IMR-90 (cell line): ENCODE measurements at regions of chr17 and their contacts with region 1.

Region 1: DNA sequence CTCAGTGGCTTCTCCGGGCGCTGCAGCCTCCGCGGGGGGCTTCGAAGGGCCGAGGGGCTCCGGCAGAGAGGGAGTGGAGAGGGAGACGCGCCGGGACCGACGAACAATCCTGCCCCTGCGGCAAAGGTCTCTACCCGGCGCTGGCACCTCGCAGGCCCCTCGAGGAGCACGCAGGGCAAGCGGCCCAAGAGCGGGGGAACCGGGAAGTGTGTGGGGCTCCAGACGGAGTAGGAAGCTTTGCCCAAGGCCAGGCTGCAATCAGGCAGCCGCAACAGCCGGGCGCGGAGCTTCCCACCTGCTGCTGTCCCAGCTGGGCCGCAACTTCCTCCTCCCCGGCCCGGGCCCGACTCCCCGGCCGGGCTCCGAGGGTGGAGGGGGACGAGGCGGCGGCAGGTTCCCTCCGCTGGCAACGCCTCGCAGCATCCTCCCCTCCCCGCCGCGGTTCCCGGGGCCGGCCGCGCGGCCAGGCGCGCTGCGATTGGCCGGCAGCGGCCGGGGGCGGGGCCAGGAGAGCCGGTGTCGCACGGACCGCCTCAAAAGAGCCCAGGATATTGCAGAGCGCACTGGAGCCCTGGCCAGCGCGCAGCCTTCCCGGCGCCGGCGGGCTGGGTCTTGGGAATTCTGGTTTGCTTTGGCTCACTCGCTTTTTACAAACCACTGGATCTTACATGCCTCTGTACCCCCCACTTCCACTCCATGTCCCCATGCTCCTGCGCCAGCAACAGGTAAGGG is at the start of gene KCNJ2:
- DNase-seq: peak; percentile 79
- ATAC-seq: peak; percentile 94
- H3K4me3 ChIP-seq: peak within 1 kb of the TSS; percentile 73
- H3K27ac ChIP-seq: peak within 1 kb of the TSS; percentile 75
- H3K4me1 ChIP-seq: no peaks in the 10 kb centered on the region
- H3K27me3 ChIP-seq: no peaks in the 10 kb centered on the region
- CTCF ChIP-seq: no peak
- POLR2A ChIP-seq: peak; percentile 66; the same call in 1 of the 2 replicates
- RAD21 ChIP-seq: no peak
- total RNA-seq, gene KCNJ2: 5.8 and 8.6 TPM in 2 replicates

Region 2: GRCh38 chr17:69327060-69327831 is 841.9 kb before region 1 on chr17 and contains the start of gene ABCA5:
- CTCF ChIA-PET with region 1: no interaction called
- POLR2A ChIA-PET with region 1: no interaction called
- dilution Hi-C with region 1: no loop called
- in situ Hi-C with region 1: no loop called
- intact Hi-C with region 1: loop called (anchors 5 kb)
- DNase-seq: peak; percentile 79
- ATAC-seq: peak; percentile 94
- H3K4me3 ChIP-seq: peak within 1 kb of the TSS; percentile 57
- H3K27ac ChIP-seq: no peak within 1 kb of the TSS
- H3K4me1 ChIP-seq: no peaks in the 10 kb centered on the region; the same call in 1 of the 2 replicates
- H3K27me3 ChIP-seq: no peaks in the 10 kb centered on the region; the same call in none of the 2 replicates
- CTCF ChIP-seq: no peak
- POLR2A ChIP-seq: no peak
- RAD21 ChIP-seq: no peak
- total RNA-seq, gene ABCA5: 2.3 and 3.6 TPM in 2 replicates

Region 3: DNA sequence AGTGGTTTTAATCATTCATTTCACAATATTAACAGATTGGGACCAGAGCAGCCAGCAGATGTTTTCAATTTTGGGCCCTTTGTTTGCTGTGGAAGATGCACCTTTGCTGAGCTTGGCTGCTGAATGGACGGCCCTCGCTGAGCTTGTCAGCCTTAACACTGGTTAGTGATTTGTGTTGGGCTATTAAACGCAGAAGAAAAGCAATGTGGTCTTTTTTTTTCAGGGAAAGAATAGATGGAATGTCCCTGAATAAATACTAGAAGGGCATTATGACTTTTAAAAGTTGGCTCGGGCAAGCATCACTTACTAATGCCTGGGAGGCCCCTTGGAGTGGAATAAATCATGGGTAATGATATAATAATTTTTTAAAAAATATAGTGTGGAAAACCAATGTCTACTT is 457.6 kb before region 1 on chr17:
- CTCF ChIA-PET with region 1: no interaction called
- POLR2A ChIA-PET with region 1: no interaction called
- dilution Hi-C with region 1: no loop called
- in situ Hi-C with region 1: no loop called
- intact Hi-C with region 1: loop called (anchors 5 kb)
- DNase-seq: no peak
- ATAC-seq: no peak
- H3K4me3 ChIP-seq: no peak overlapping the region
- H3K27ac ChIP-seq: no peak overlapping the region
- H3K4me1 ChIP-seq: peaks cover 6% of the 10 kb centered on the region
- H3K27me3 ChIP-seq: no peaks in the 10 kb centered on the region
- CTCF ChIP-seq: no peak
- POLR2A ChIP-seq: no peak
- RAD21 ChIP-seq: no peak

Region 4: GRCh38 chr17:70405492-70406220 is 236.5 kb after region 1 on chr17:
- CTCF ChIA-PET with region 1: no interaction called
- POLR2A ChIA-PET with region 1: no interaction called
- dilution Hi-C with region 1: no loop called
- in situ Hi-C with region 1: no loop called
- intact Hi-C with region 1: loop called (anchors 5 kb)
- DNase-seq: peak; percentile 97
- ATAC-seq: peak; percentile 95
- H3K4me3 ChIP-seq: no peak overlapping the region
- H3K27ac ChIP-seq: no peak overlapping the region
- H3K4me1 ChIP-seq: peaks cover 5% of the 10 kb centered on the region
- H3K27me3 ChIP-seq: no peaks in the 10 kb centered on the region; the same call in 1 of the 2 replicates
- CTCF ChIP-seq: no peak
- POLR2A ChIP-seq: no peak
- RAD21 ChIP-seq: no peak

Region 5: GRCh38 chr17:70552230-70552981 is 383.3 kb after region 1 on chr17:
- CTCF ChIA-PET with region 1: interaction called, 5 read pairs
- POLR2A ChIA-PET with region 1: no interaction called
- dilution Hi-C with region 1: no loop called
- in situ Hi-C with region 1: loop called (anchors 10 kb)
- intact Hi-C with region 1: loop called (anchors 10 kb)
- DNase-seq: peak; percentile 49
- ATAC-seq: peak; percentile 76
- H3K4me3 ChIP-seq: no peak overlapping the region
- H3K27ac ChIP-seq: no peak overlapping the region
- H3K4me1 ChIP-seq: no peaks in the 10 kb centered on the region; the same call in 1 of the 2 replicates
- H3K27me3 ChIP-seq: no peaks in the 10 kb centered on the region
- CTCF ChIP-seq: peak; percentile 59
- POLR2A ChIP-seq: no peak
- RAD21 ChIP-seq: peak; percentile 60

Region 6: GRCh38 chr17:70622368-70623260 is 453.5 kb after region 1 on chr17:
- CTCF ChIA-PET with region 1: no interaction called
- POLR2A ChIA-PET with region 1: no interaction called
- dilution Hi-C with region 1: no loop called
- in situ Hi-C with region 1: no loop called
- intact Hi-C with region 1: loop called (anchors 2 kb)
- DNase-seq: peak; percentile 18
- ATAC-seq: peak; percentile 63
- H3K4me3 ChIP-seq: no peak overlapping the region
- H3K27ac ChIP-seq: no peak overlapping the region
- H3K4me1 ChIP-seq: no peaks in the 10 kb centered on the region
- H3K27me3 ChIP-seq: no peaks in the 10 kb centered on the region; the same call in none of the 2 replicates
- CTCF ChIP-seq: peak; percentile 36
- POLR2A ChIP-seq: no peak
- RAD21 ChIP-seq: peak; percentile 42; the same call in 1 of the 2 replicates